SK-N-SH (cell line): ENCODE measurements at regions of chr6 and their contacts with region 1.

Region 1: GRCh38 chr6:2988426-2989331 is 11.0 kb upstream of the NQO2 start:
- DNase-seq: peak; percentile 91
- H3K4me3 ChIP-seq: peak overlapping the region; percentile 66 to 81
- H3K27ac ChIP-seq: peak overlapping the region; percentile 98 to 99
- H3K4me1 ChIP-seq: peaks cover 18 to 19% of the 10 kb centered on the region in 2 experiments
- H3K27me3 ChIP-seq: no peaks in the 10 kb centered on the region
- CTCF ChIP-seq: peak; percentile 74
- EP300 ChIP-seq: no peak; a peak in 2 of 4 replicates
- RAD21 ChIP-seq: peak; percentile 76

Region 2: GRCh38 chr6:2791124-2791974 is 197.3 kb before region 1 on chr6:
- CTCF ChIA-PET with region 1: interaction called, 17 read pairs
- POLR2A ChIA-PET with region 1: no interaction called
- DNase-seq: peak; percentile 77
- H3K4me3 ChIP-seq: no peak overlapping the region
- H3K27ac ChIP-seq: peak overlapping the region; percentile 11 to 67; a peak in 3 of 4 replicates
- H3K4me1 ChIP-seq: peaks cover 4 to 9% of the 10 kb centered on the region in 2 experiments; a peak in 2 of 4 replicates
- H3K27me3 ChIP-seq: no peaks in the 10 kb centered on the region
- CTCF ChIP-seq: peak; percentile 80
- EP300 ChIP-seq: no peak
- RAD21 ChIP-seq: peak; percentile 93

Region 3: DNA sequence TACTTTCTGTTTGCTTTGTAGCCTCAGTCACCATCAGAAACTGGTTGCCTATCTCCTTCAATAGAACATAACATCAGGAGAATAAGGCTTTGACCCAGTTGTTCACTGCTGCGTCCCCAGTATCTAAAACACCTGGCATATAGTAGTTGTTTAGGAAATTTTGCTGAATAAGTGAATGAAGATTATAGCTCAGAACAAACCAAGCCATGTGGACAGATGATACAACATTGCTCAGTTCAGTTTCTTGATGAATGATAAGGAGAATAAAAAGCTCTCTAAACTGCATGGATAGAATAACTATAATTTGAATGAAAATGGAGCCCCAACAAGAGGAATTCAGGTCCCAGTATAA is 141.8 kb before region 1 on chr6:
- CTCF ChIA-PET with region 1: interaction called, 36 read pairs
- POLR2A ChIA-PET with region 1: interaction called, 14 read pairs
- DNase-seq: no peak
- H3K4me3 ChIP-seq: peak overlapping the region in 1 of 2 experiments; percentile 28; a peak in 1 of 4 replicates
- H3K27ac ChIP-seq: peak overlapping the region; percentile 63 to 67; a peak in 3 of 4 replicates
- H3K4me1 ChIP-seq: peaks cover 0 to 9% of the 10 kb centered on the region in 2 experiments; a peak in 2 of 4 replicates
- H3K27me3 ChIP-seq: no peaks in the 10 kb centered on the region
- CTCF ChIP-seq: no peak
- EP300 ChIP-seq: no peak
- RAD21 ChIP-seq: no peak

Region 4: DNA sequence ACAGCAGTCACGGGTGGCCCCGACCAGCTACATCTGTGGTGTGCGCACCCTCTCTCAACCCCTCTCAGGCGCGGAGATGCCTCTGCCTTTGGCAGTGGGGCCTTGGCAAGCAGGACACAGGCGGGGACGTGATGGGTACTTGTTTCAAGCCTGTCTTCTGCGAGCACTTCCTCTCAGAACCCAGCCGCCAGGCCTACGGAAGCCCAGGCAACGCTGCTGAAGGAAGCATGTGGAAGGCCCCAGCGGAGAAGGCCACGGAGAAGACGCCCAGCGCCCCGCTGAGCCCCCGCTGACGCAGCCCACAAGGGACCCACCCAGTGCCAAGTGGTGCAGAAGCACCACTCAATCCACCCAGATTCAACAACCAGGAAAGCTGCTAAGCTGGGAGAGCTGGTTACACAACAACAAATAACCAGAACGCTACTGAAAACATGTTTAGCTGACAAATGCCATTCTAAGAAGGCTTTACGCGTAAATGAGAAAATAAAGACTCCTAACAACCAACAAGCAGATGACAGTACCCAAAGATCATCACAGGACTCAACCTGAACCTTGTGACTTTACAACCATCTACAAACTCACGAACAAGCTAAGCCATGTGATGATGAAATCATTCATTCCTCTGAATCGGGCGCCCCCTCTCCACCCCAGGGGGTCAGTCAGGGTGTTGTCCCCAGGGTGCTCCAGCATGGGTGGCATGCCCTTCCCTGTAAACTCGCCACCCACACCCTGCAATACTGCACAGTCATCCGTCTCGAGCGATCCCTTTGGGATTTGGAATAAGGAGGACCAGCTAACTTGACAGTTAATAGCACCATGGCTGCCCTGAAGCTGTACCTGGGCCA is 30.1 kb before region 1 on chr6:
- CTCF ChIA-PET with region 1: interaction called, 88 read pairs
- POLR2A ChIA-PET with region 1: no interaction called
- DNase-seq: no peak
- H3K4me3 ChIP-seq: no peak overlapping the region
- H3K27ac ChIP-seq: no peak overlapping the region; a peak in 1 of 4 replicates
- H3K4me1 ChIP-seq: peaks cover 0 to 15% of the 10 kb centered on the region in 2 experiments; a peak in 3 of 4 replicates
- H3K27me3 ChIP-seq: no peaks in the 10 kb centered on the region
- CTCF ChIP-seq: no peak
- EP300 ChIP-seq: no peak
- RAD21 ChIP-seq: no peak

Region 5: DNA sequence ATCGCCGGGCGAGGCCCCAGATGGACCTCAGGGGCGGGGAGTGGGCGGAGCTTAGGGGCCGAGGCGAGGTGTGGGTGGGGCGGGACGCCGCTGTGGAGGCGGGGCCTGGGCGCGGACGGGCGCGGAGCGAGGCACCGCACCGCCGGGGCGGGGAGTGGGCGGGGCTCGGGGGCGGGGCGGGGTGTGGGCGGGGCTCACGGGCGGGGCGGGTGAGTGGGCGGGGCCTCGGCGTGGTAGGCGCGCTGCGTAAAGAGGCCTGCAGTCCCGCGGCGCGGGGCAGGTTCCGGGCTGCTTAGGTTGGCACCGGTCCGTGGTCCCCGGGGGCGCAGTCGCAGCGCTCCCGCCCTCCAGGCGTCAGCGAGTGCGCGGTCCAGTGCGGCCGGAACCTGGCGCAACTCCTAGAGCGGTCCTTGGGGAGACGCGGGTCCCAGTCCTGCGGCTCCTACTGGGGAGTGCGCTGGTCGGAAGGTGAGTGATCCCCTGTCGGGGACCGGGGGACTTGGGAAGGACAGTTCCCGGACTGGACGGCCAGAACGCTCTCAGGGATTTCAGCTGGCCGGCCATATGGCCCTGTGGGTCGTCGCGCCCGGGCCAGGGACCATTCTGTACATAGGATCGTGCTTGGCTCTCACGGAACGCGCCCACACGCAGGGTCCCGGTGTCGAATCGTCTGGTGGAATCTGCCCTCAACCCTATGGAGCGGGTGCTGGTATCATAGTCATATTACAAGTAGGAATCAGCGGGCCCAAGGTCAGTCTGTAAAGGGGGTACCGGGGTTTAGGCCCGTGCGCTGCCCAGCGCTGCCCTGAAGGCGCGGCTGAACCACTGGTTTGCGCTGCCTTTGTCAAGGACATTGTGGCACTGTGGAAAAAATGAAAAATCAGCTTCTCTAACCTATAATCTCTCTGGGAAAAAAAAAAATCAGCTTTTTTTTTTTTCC is 11.2 kb after region 1 on chr6 and contains the start of gene NQO2:
- CTCF ChIA-PET with region 1: interaction called, 4 read pairs
- POLR2A ChIA-PET with region 1: interaction called, 16 read pairs
- DNase-seq: peak; percentile 99
- H3K4me3 ChIP-seq: peak within 1 kb of the TSS; percentile 78 to 84
- H3K27ac ChIP-seq: peak within 1 kb of the TSS; percentile 23 to 60; a peak in 3 of 4 replicates
- H3K4me1 ChIP-seq: peaks cover 0 to 11% of the 10 kb centered on the region in 2 experiments; a peak in 1 of 4 replicates
- H3K27me3 ChIP-seq: no peaks in the 10 kb centered on the region
- CTCF ChIP-seq: no peak
- EP300 ChIP-seq: no peak
- RAD21 ChIP-seq: no peak
- polyA plus RNA-seq, gene NQO2: 19.2 and 22.5 TPM in 2 replicates

Region 6: GRCh38 chr6:3013479-3013878 is 24.8 kb after region 1 on chr6:
- CTCF ChIA-PET with region 1: no interaction called
- POLR2A ChIA-PET with region 1: no interaction called
- DNase-seq: no peak
- H3K4me3 ChIP-seq: no peak overlapping the region
- H3K27ac ChIP-seq: no peak overlapping the region
- H3K4me1 ChIP-seq: no peaks in the 10 kb centered on the region; a peak in 1 of 4 replicates
- H3K27me3 ChIP-seq: no peaks in the 10 kb centered on the region
- CTCF ChIP-seq: no peak
- EP300 ChIP-seq: no peak
- RAD21 ChIP-seq: no peak

Region 7: DNA sequence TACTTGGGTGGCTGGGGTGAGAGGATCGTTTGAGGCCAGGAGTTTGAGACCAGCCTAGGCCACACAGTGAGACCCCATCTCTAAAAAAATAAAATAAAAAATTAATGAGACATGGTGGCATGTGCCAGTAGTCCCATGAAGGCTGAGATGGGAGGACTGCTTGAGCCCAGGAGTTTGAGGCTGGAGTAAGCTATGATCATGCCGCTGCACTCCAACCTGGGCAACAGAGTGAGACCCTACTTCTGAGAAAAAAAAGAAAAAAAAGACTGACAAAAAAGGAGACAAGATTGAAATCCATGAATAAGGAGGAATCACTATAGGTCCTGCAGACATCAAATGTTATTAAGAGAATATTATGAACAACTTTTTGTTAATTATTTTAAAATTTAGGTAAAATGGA is 106.1 kb after region 1 on chr6:
- CTCF ChIA-PET with region 1: no interaction called
- POLR2A ChIA-PET with region 1: no interaction called
- DNase-seq: no peak
- H3K4me3 ChIP-seq: no peak overlapping the region
- H3K27ac ChIP-seq: no peak overlapping the region
- H3K4me1 ChIP-seq: peaks cover 0 to 3% of the 10 kb centered on the region in 2 experiments; a peak in 1 of 4 replicates
- H3K27me3 ChIP-seq: no peaks in the 10 kb centered on the region
- CTCF ChIP-seq: no peak
- EP300 ChIP-seq: no peak
- RAD21 ChIP-seq: no peak